ENCODE measurements at regions of chr3 and their contacts with region 1.

Region 1: GRCh38 chr3:160554980-160555379 is 10.4 kb downstream of the KPNA4 start:
- DNase-seq: no peak
- H3K4me3 ChIP-seq: no peak overlapping the region
- H3K27ac ChIP-seq: no peak overlapping the region
- H3K4me1 ChIP-seq: no peaks in the 10 kb centered on the region
- H3K27me3 ChIP-seq: no peaks in the 10 kb centered on the region
- CTCF ChIP-seq: no peak

Region 2: GRCh38 chr3:160417311-160417710 is 137.7 kb before region 1 on chr3:
- CTCF ChIA-PET with region 1: no interaction called
- dilution Hi-C with region 1: no loop called
- in situ Hi-C with region 1: no loop called
- intact Hi-C with region 1: no loop called
- DNase-seq: no peak
- H3K4me3 ChIP-seq: no peak overlapping the region
- H3K27ac ChIP-seq: no peak overlapping the region
- H3K4me1 ChIP-seq: no peaks in the 10 kb centered on the region
- H3K27me3 ChIP-seq: no peaks in the 10 kb centered on the region
- CTCF ChIP-seq: no peak

Region 3: GRCh38 chr3:160473978-160474377 is 81.0 kb before region 1 on chr3:
- CTCF ChIA-PET with region 1: no interaction called
- dilution Hi-C with region 1: no loop called
- in situ Hi-C with region 1: no loop called
- intact Hi-C with region 1: no loop called
- DNase-seq: peak; percentile 85
- H3K4me3 ChIP-seq: no peak overlapping the region
- H3K27ac ChIP-seq: no peak overlapping the region
- H3K4me1 ChIP-seq: peaks cover 36% of the 10 kb centered on the region
- H3K27me3 ChIP-seq: no peaks in the 10 kb centered on the region
- CTCF ChIP-seq: no peak

Region 4: GRCh38 chr3:160501325-160501724 is 53.7 kb before region 1 on chr3:
- CTCF ChIA-PET with region 1: no interaction called
- dilution Hi-C with region 1: loop called (anchors 5 kb)
- in situ Hi-C with region 1: no loop called
- intact Hi-C with region 1: no loop called
- DNase-seq: no peak
- H3K4me3 ChIP-seq: no peak overlapping the region
- H3K27ac ChIP-seq: no peak overlapping the region
- H3K4me1 ChIP-seq: no peaks in the 10 kb centered on the region
- H3K27me3 ChIP-seq: no peaks in the 10 kb centered on the region
- CTCF ChIP-seq: no peak

Measured in mammary epithelial cell (primary cell).